ENCODE measurements at regions of chr5 and their contacts with region 1.

Region 1: DNA sequence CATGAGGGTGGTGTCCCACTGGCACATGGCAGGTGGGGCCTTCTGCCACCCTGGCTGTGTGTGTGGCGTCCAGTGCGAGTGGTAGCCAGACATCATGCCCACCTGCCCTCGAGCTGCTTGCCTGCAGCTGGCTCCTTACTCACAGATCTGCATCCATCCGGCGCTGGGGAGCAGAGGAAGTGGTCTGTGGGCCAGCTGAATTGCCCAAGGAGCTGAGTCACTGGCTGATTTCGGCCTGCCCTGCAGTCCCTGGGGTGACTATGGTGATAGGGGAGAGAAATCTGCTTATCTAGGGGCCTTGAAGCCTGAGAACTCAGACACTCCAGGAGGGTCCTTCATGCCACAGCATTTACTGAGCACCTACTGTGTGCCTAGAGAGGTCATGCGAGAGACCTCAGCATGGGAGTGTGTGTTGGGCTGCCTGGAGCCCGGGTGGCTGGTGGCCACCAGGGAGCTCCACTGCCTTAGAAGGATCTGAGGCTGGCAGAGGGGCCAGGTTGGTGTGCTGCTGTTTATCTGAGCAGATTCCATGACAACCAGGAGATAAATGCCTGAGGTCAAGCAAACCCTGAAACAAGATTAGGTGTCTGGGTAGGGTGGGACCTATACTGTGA is 57.1 kb downstream of the SLC22A5 start:
- DNase-seq: peak; percentile 83
- H3K4me3 Mint-ChIP-seq: peak overlapping the region; percentile 46
- H3K27ac Mint-ChIP-seq: peak overlapping the region; percentile 95
- H3K4me1 Mint-ChIP-seq: peaks cover 94% of the 10 kb centered on the region
- H3K27me3 Mint-ChIP-seq: no peaks in the 10 kb centered on the region

Region 2: DNA sequence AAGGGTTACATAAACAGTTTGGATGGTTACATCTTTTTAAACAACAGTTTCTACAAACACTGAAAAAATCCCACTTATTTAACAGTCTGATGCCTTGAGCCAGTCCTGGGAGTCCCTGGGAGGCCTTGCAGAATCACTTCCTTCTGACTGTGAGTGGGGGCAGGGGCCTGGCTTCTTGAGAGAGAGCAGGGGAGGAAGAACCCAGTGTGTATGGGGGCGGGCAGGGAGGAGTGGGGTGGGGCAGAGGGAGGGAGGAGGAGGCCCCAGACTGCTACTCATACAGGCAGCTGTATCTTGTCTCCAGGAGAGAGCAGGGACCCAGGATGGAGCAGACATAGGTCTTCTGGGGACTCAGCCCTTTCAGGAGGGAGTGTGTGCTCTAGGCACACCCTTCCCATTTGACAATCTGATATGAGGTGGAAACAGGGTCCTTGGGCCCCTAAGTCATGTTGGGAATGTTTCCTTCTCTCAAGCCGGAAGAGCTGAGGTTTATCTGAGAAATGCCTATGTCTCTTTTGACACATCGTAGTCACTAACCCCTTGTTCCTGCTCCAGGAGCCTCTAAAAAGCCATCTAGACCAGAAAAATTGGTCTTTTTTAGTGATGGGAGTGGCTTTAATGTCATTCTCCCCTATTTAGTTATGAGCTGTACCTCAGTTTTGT is 11.1 kb after region 1 on chr5:
- CTCF ChIA-PET with region 1: interaction called, 6 read pairs
- intact Hi-C with region 1: loop called (anchors 1 kb)
- DNase-seq: peak; percentile 83
- H3K4me3 Mint-ChIP-seq: peak overlapping the region; percentile 46
- H3K27ac Mint-ChIP-seq: peak overlapping the region; percentile 81
- H3K4me1 Mint-ChIP-seq: peaks cover 83% of the 10 kb centered on the region
- H3K27me3 Mint-ChIP-seq: no peaks in the 10 kb centered on the region

Region 3: DNA sequence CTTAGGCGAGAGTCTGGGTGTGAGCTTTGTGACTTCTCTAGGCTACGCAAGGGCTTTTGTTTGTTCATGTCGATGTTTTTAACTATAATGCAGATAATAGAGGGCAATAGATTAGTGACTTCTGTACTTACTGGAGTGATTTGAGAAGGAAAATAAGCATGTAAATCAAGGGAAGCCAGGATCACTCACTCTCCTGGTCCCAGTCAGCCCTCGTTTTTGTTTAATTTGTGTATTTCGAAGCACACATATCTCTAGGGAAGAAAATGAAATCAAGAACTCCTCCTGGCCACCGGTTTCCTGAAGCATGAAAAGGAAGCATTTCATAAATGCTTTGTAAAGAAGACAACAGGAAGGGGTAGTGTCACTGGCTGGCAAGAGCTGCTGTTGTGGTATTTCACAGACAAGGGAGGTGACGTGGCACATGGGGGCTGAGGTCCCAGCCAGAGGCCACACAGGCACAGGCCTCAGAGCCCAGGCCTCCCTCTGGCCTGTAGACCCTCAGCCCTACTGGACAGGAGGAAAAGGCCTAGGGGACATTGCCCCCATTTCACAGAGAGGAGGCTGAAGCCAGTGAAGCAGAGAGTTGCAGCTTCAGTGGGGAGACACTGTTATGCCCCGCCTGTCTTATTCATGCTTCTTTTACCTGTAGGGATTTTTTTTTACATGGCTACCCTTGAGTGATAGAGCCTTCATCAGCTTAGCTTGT is 29.8 kb after region 1 on chr5:
- CTCF ChIA-PET with region 1: interaction called, 20 read pairs
- intact Hi-C with region 1: loop called (anchors 1 kb)
- DNase-seq: peak; percentile 66
- H3K4me3 Mint-ChIP-seq: peak overlapping the region; percentile 0
- H3K27ac Mint-ChIP-seq: peak overlapping the region; percentile 83
- H3K4me1 Mint-ChIP-seq: peaks cover 84% of the 10 kb centered on the region
- H3K27me3 Mint-ChIP-seq: no peaks in the 10 kb centered on the region

Region 4: GRCh38 chr5:132473019-132473531 is 46.4 kb after region 1 on chr5:
- CTCF ChIA-PET with region 1: interaction called, 12 read pairs
- intact Hi-C with region 1: no loop called
- DNase-seq: peak; percentile 86
- H3K4me3 Mint-ChIP-seq: peak overlapping the region; percentile 16
- H3K27ac Mint-ChIP-seq: peak overlapping the region; percentile 80
- H3K4me1 Mint-ChIP-seq: peaks cover 67% of the 10 kb centered on the region
- H3K27me3 Mint-ChIP-seq: no peaks in the 10 kb centered on the region

Region 5: DNA sequence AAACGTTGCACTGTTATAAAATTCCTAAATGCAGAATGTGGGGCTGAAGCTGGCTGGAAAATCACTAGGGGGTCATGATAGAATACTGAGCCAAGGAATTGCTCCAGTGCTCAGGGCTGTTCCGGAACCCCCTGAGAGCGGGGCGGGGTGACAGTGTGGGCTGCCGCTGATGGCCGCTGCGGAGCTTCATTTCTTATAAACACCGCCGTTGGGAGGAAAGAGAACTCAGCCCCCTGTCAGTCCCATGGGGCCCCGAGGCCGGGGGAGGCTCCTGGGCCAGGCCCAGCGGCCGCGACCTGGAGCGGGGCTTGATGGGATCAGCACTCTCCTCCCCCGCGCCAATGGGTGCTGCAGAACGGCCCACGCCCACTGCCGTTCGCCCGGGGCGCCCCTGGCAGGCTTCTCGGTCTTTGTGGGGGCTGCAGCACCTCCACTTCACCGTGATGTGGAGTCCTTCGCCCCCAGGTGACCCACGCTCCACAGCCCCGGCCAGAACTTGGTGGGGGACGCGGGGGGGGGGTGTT is 69.1 kb after region 1 on chr5:
- CTCF ChIA-PET with region 1: interaction called, 76 read pairs
- intact Hi-C with region 1: loop called (anchors 1 kb)
- DNase-seq: peak; percentile 79
- H3K4me3 Mint-ChIP-seq: peak overlapping the region; percentile 84
- H3K27ac Mint-ChIP-seq: peak overlapping the region; percentile 91
- H3K4me1 Mint-ChIP-seq: peaks cover 56% of the 10 kb centered on the region
- H3K27me3 Mint-ChIP-seq: no peaks in the 10 kb centered on the region

Measured in activated naive CD4-positive, alpha-beta T cell treated with anti-CD3 and anti-CD28 coated beads for 36 hours (primary cell).